MCF 10A (cell line): ENCODE measurements at regions of chr4 and their contacts with region 1.

Region 1: GRCh38 chr4:80365928-80366327 is 30.4 kb downstream of the CFAP299 start:
- DNase-seq: peak; percentile 71
- H3K4me3 Mint-ChIP-seq: no peak overlapping the region
- H3K27ac Mint-ChIP-seq: no peak overlapping the region
- H3K4me1 Mint-ChIP-seq: peaks cover 5% of the 10 kb centered on the region
- H3K27me3 Mint-ChIP-seq: no peaks in the 10 kb centered on the region
- CTCF ChIP-seq: peak; percentile 67

Region 2: GRCh38 chr4:80062527-80062926 is 303.4 kb before region 1 on chr4:
- CTCF ChIA-PET with region 1: no interaction called
- POLR2A ChIA-PET with region 1: no interaction called
- intact Hi-C with region 1: no loop called
- DNase-seq: no peak
- H3K4me3 Mint-ChIP-seq: no peak overlapping the region
- H3K27ac Mint-ChIP-seq: no peak overlapping the region
- H3K4me1 Mint-ChIP-seq: no peaks in the 10 kb centered on the region
- H3K27me3 Mint-ChIP-seq: no peaks in the 10 kb centered on the region
- CTCF ChIP-seq: no peak

Region 3: DNA sequence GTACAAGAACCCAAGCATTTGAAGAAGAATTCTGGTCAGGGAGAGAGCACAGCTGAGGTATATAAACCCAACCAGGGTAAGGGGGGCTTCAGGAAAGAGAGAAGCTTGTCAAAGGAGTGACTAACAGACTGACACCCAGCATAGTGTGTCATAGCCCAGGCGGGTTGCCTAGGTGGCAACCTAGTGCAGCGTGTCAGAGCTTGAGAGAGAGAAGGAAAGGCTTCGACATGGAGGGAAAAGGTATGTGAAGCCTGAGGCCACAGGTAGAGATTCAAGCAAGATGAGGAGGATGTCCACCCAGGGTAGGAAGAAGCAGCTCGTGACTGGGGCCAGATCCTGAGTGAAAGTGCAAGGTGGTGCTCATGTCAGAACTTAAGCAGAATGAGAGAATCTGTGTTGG is 284.3 kb before region 1 on chr4:
- CTCF ChIA-PET with region 1: no interaction called
- POLR2A ChIA-PET with region 1: no interaction called
- intact Hi-C with region 1: no loop called
- DNase-seq: no peak
- H3K4me3 Mint-ChIP-seq: no peak overlapping the region
- H3K27ac Mint-ChIP-seq: no peak overlapping the region
- H3K4me1 Mint-ChIP-seq: peaks cover 27% of the 10 kb centered on the region
- H3K27me3 Mint-ChIP-seq: no peaks in the 10 kb centered on the region
- CTCF ChIP-seq: no peak

Region 4: GRCh38 chr4:80619070-80619674 is 253.2 kb after region 1 on chr4:
- CTCF ChIA-PET with region 1: interaction called, 5 read pairs
- POLR2A ChIA-PET with region 1: no interaction called
- intact Hi-C with region 1: loop called (anchors 2 kb)
- DNase-seq: peak; percentile 38
- H3K4me3 Mint-ChIP-seq: no peak overlapping the region
- H3K27ac Mint-ChIP-seq: no peak overlapping the region
- H3K4me1 Mint-ChIP-seq: no peaks in the 10 kb centered on the region
- H3K27me3 Mint-ChIP-seq: no peaks in the 10 kb centered on the region
- CTCF ChIP-seq: peak; percentile 40

Region 5: GRCh38 chr4:80989921-80990544 is 624.1 kb after region 1 on chr4:
- CTCF ChIA-PET with region 1: interaction called, 45 read pairs
- POLR2A ChIA-PET with region 1: interaction called, 6 read pairs
- intact Hi-C with region 1: loop called (anchors 1 kb)
- DNase-seq: peak; percentile 70
- H3K4me3 Mint-ChIP-seq: no peak overlapping the region
- H3K27ac Mint-ChIP-seq: no peak overlapping the region
- H3K4me1 Mint-ChIP-seq: no peaks in the 10 kb centered on the region
- H3K27me3 Mint-ChIP-seq: no peaks in the 10 kb centered on the region
- CTCF ChIP-seq: peak; percentile 66

Region 6: DNA sequence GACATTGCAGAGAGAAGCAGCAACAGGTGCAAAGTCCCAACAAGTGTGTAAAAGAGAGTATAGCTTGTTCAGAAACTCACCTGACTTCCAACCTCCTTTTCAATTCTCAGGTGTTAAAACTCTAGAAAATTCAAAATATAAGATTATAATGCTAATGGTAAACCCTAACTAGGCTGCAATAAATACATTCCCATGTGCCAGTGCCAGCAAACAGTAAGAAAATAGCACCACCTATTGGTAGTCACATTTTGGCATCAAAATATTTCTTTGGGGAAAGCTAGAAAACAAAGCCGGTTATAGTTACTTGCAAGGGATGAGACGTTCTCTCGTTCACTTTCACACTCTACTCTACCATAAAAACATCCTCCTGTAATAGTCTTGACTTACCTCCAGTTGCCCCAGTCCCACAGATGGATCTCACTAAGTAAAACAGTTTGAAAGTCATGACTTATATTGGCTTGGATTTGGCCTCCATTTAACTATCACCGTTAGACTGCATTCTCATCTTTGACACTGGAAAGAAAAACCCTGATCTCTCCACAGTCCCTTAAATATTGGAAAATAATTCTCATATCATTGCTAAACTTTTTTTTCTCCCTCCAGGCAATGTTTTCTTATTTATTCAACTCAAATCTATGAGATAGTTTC is 674.2 kb after region 1 on chr4:
- CTCF ChIA-PET with region 1: interaction called, 189 read pairs
- POLR2A ChIA-PET with region 1: interaction called, 4 read pairs
- intact Hi-C with region 1: loop called (anchors 1 kb)
- DNase-seq: peak; percentile 60
- H3K4me3 Mint-ChIP-seq: no peak overlapping the region
- H3K27ac Mint-ChIP-seq: no peak overlapping the region
- H3K4me1 Mint-ChIP-seq: peaks cover 27% of the 10 kb centered on the region
- H3K27me3 Mint-ChIP-seq: no peaks in the 10 kb centered on the region
- CTCF ChIP-seq: peak; percentile 82

Region 7: DNA sequence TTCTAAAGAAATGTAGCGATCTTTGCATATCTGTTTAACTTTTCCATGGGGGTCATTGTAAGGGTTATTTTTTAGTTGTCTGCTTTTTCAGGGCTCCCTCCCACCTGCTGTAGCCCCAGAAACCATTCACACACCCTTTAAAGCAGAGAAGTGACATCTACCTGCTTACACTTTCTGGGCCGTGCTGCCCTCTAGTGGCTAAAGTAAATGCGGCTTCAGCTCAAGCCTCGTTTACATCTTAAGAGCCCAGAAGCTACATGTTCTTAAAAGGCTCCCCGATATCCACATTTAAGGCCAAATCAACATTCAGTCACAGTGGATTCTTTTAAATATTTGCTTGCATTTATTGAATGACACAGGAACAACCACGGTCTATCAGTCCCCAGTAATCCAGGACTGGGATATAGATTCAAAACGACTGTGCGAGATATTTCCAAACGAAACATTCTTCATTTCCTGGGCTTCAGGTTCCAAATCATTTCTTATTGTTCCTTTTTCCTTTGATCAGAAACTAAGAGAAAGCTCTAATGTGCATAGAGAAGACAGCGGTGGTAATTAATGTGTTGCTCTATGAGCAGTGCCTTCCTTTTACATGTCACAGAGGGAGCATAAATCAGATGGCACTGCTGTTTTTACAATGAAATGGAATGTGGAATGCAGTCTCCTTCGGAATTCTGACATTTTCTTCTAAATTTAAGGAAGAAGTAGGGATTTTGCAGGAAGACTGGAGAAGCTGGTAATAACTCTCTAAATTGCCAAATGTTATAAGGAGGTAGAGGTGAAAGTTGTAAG is 985.9 kb after region 1 on chr4:
- CTCF ChIA-PET with region 1: interaction called, 4 read pairs
- POLR2A ChIA-PET with region 1: no interaction called
- intact Hi-C with region 1: loop called (anchors 5 kb)
- DNase-seq: peak; percentile 81
- H3K4me3 Mint-ChIP-seq: no peak overlapping the region
- H3K27ac Mint-ChIP-seq: no peak overlapping the region
- H3K4me1 Mint-ChIP-seq: no peaks in the 10 kb centered on the region
- H3K27me3 Mint-ChIP-seq: no peaks in the 10 kb centered on the region
- CTCF ChIP-seq: peak; percentile 74